HepG2 (cell line): ENCODE measurements at regions of chr1 and their contacts with region 1.

Region 1: GRCh38 chr1:200890818-200891773 is 3.6 kb upstream of the INAVA start:
- DNase-seq: peak; percentile 68
- ATAC-seq: peak; percentile 60
- H3K4me3 ChIP-seq: peak overlapping the region; percentile 68 to 82 (median 70)
- H3K27ac ChIP-seq: peak overlapping the region; percentile 92
- H3K4me1 ChIP-seq: peaks cover 91% of the 10 kb centered on the region
- H3K27me3 ChIP-seq: no peaks in the 10 kb centered on the region
- CTCF ChIP-seq: peak; percentile 78
- EP300 ChIP-seq: no peak; a peak in 1 of 4 replicates
- POLR2A ChIP-seq: peak; percentile 16 to 56; a peak in 2 of 4 replicates
- RAD21 ChIP-seq: peak; percentile 68

Region 2: DNA sequence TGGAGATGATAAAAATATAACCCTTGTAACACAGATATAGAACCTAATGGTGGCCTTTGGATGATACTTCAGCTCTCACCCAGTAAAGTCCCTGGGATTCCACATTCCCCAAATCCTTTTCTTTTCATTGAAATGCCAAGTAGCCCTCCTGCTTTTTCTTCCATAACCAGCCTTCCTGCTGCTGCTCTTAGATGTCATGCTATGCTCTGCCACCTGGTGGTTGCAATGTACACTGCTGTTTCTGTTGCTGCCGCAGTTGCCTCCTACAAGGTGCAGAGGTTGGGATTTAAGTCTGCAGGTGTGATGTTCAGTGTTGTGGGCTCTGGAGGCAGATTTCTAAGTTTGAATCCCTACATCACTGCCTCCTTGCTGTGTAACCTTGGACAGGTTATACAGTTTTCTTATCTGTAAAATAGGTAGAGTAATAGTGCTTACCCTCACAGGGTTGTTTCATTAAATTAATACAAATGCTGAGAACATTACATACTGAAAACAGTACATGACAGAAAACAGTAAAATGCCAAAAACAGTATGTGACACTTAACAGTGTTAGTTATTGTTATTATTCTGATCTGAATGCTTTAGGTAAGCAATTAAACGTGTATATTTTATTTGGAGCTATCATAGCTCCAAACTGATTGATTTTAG is 88.1 kb before region 1 on chr1:
- CTCF ChIA-PET with region 1: no interaction called
- POLR2A ChIA-PET with region 1: no interaction called
- in situ Hi-C with region 1: no loop called
- intact Hi-C with region 1: no loop called
- DNase-seq: peak; percentile 71
- ATAC-seq: peak; percentile 95
- H3K4me3 ChIP-seq: no peak overlapping the region
- H3K27ac ChIP-seq: no peak overlapping the region
- H3K4me1 ChIP-seq: no peaks in the 10 kb centered on the region
- H3K27me3 ChIP-seq: no peaks in the 10 kb centered on the region
- CTCF ChIP-seq: peak; percentile 91
- EP300 ChIP-seq: no peak
- POLR2A ChIP-seq: no peak
- RAD21 ChIP-seq: peak; percentile 75

Region 3: GRCh38 chr1:200907611-200908097 is 16.6 kb after region 1 on chr1:
- CTCF ChIA-PET with region 1: interaction called, 14 read pairs
- POLR2A ChIA-PET with region 1: interaction called, 129 read pairs
- in situ Hi-C with region 1: no loop called
- intact Hi-C with region 1: loop called (anchors 1 kb)
- DNase-seq: peak; percentile 90
- ATAC-seq: peak; percentile 90
- H3K4me3 ChIP-seq: no peak overlapping the region
- H3K27ac ChIP-seq: no peak overlapping the region
- H3K4me1 ChIP-seq: peaks cover 52% of the 10 kb centered on the region
- H3K27me3 ChIP-seq: no peaks in the 10 kb centered on the region
- CTCF ChIP-seq: peak; percentile 37
- EP300 ChIP-seq: peak in 1 of 2 experiments; percentile 63; a peak in 1 of 4 replicates
- POLR2A ChIP-seq: no peak
- RAD21 ChIP-seq: no peak

Region 4: GRCh38 chr1:200971955-200972711 is 81.0 kb after region 1 on chr1:
- CTCF ChIA-PET with region 1: interaction called, 7 read pairs
- POLR2A ChIA-PET with region 1: interaction called, 3 read pairs
- in situ Hi-C with region 1: loop called (anchors 5 kb)
- intact Hi-C with region 1: loop called (anchors 1 kb)
- DNase-seq: peak; percentile 30
- ATAC-seq: peak; percentile 12; the same call in 2 of the 3 replicates
- H3K4me3 ChIP-seq: no peak overlapping the region
- H3K27ac ChIP-seq: no peak overlapping the region
- H3K4me1 ChIP-seq: 0 out of 2 replicates have a peak, but pooled peaks cover 19% of the 10 kb centered on the region
- H3K27me3 ChIP-seq: peaks cover 2 to 6% of the 10 kb centered on the region in 2 experiments; a peak in 4 of 5 replicates
- CTCF ChIP-seq: peak; percentile 67
- EP300 ChIP-seq: no peak
- POLR2A ChIP-seq: no peak
- RAD21 ChIP-seq: 0 out of 2 replicates have a peak, but pooled peaks have one; percentile 27

Region 5: GRCh38 chr1:201042779-201043461 is 151.8 kb after region 1 on chr1:
- CTCF ChIA-PET with region 1: interaction called, 4 read pairs
- POLR2A ChIA-PET with region 1: no interaction called
- in situ Hi-C with region 1: loop called (anchors 5 kb)
- intact Hi-C with region 1: loop called (anchors 2 kb)
- DNase-seq: peak; percentile 29
- ATAC-seq: peak; percentile 85
- H3K4me3 ChIP-seq: no peak overlapping the region
- H3K27ac ChIP-seq: no peak overlapping the region
- H3K4me1 ChIP-seq: 0 out of 2 replicates have a peak, but pooled peaks cover 4% of the 10 kb centered on the region
- H3K27me3 ChIP-seq: peaks cover 0 to 5% of the 10 kb centered on the region in 2 experiments; a peak in 2 of 5 replicates
- CTCF ChIP-seq: peak; percentile 89
- EP300 ChIP-seq: no peak
- POLR2A ChIP-seq: no peak
- RAD21 ChIP-seq: peak; percentile 71; the same call in 1 of the 2 replicates